ENCODE measurements at regions of chr2 and their contacts with region 1.

Region 1: DNA sequence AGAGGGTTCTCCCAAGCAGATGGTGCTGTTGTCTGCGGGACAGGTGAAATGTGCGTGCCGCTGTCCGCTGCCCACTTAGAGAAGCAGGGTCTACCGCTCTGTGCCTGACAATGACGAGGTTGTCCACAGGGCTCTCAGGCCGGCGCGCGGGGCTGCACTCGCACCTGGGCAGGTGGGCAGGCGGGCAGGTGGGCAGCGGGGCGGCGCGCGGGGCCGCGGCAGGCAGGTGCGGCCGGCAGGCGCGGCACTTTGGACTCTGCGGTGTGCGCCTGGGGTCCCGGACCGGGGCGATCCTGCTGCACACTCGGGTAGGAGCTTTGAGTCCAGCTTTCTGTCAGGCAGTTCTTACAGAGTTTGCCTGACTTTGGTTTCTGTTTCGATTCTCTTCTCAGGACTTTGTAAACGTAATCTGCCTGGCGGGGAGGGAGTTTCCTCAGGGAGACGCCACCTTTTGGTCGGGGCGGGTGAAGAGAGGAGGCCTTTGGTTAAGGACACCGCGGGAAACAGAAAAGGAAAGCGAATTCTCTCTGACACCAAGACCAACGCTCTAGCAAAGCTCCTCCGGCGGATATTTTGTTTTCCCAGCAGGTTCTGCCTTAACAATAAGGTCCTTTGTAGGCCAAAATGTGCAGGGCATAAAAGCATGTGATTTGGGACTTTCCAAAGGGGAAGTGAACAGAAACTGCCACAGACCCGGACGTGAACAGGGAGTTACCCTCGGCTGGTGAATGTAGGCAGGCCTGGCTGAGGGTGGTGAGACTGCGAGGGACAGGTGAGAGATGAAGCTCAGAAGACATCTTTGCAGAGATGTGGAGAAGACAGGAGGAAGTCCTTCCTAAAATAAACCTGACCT is at the start of gene IFIH1:
- DNase-seq: peak; percentile 40 to 91 (median 77)
- ATAC-seq: peak; percentile 72 to 90 (median 74)
- H3K4me3 ChIP-seq: peak within 1 kb of the TSS; percentile 73 to 90
- H3K4me3 Mint-ChIP-seq: peak within 1 kb of the TSS; percentile 94 to 98 (median 97)
- H3K27ac ChIP-seq: peak within 1 kb of the TSS; percentile 92
- H3K27ac Mint-ChIP-seq: peak within 1 kb of the TSS; percentile 98 to 100
- H3K4me1 ChIP-seq: peaks cover 15 to 18% of the 10 kb centered on the region in 2 experiments
- H3K4me1 Mint-ChIP-seq: peaks cover 63 to 72% (median 67%) of the 10 kb centered on the region in 3 donors
- H3K27me3 ChIP-seq: no peaks in the 10 kb centered on the region
- H3K27me3 Mint-ChIP-seq: no peaks in the 10 kb centered on the region
- total RNA-seq, gene IFIH1: 25.1 to 34.1 (median 29.2) TPM

Region 2: DNA sequence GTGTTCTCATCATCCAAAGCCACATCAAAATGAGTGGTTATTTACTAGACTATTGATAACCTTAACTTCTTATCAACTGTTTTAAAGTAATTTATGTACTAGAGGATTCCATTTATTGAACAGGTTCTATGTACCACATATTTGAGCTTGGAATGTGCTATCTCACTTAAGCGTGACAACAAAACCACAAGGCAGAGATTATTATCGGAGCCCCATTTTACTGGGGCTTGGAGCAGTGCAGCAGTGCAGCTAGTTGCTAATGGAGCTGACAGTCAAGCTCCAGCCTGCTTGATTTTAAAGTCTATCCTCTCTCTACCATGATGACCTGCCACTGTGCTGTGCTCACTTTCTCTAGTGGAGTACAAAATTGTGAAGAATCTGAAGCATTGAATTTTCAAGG is 191.1 kb before region 1 on chr2:
- CTCF ChIA-PET with region 1: no interaction called
- POLR2A ChIA-PET with region 1: no interaction called
- DNase-seq: no peak
- ATAC-seq: peak in 3 of 4 experiments; percentile 34 to 64 (median 53)
- H3K4me3 ChIP-seq: no peak overlapping the region
- H3K4me3 Mint-ChIP-seq: no peak overlapping the region
- H3K27ac ChIP-seq: no peak overlapping the region
- H3K27ac Mint-ChIP-seq: no peak overlapping the region
- H3K4me1 ChIP-seq: no peaks in the 10 kb centered on the region
- H3K4me1 Mint-ChIP-seq: peaks cover 9 to 18% (median 16%) of the 10 kb centered on the region in 3 donors
- H3K27me3 ChIP-seq: no peaks in the 10 kb centered on the region
- H3K27me3 Mint-ChIP-seq: no peaks in the 10 kb centered on the region

Region 3: DNA sequence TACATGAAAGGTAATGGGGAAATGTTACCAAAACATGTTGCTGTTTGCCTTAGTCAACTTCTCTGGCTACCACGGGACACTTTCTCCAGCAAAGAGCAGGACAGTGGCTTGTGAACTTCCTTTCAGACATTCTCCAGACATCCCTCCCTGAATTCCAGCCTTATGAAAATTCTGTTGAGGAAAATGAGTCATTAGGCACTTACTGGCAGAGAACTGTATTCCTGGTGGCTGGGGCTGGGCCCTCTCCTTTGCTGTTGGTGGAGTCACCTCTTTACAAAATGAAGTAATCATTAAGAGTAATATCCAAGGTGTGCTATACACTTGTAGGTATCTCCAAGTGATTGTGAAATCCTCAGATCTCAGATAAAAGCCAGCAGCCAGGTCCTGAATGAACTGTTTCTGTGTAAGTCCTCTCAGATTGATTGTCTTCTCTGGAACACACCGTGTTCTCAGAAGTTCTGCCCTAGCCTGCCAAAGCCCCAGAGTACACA is 74.0 kb before region 1 on chr2:
- CTCF ChIA-PET with region 1: no interaction called
- POLR2A ChIA-PET with region 1: no interaction called
- DNase-seq: no peak
- ATAC-seq: no peak
- H3K4me3 ChIP-seq: no peak overlapping the region
- H3K4me3 Mint-ChIP-seq: no peak overlapping the region
- H3K27ac ChIP-seq: no peak overlapping the region
- H3K27ac Mint-ChIP-seq: no peak overlapping the region
- H3K4me1 ChIP-seq: no peaks in the 10 kb centered on the region
- H3K4me1 Mint-ChIP-seq: no peaks in the 10 kb centered on the region
- H3K27me3 ChIP-seq: peaks cover 0 to 2% of the 10 kb centered on the region in 2 experiments
- H3K27me3 Mint-ChIP-seq: peaks cover 18 to 21% of the 10 kb centered on the region in 2 donors

Region 4: GRCh38 chr2:162282765-162283425 is 35.7 kb before region 1 on chr2:
- CTCF ChIA-PET with region 1: no interaction called
- POLR2A ChIA-PET with region 1: no interaction called
- DNase-seq: no peak
- ATAC-seq: no peak
- H3K4me3 ChIP-seq: no peak overlapping the region
- H3K4me3 Mint-ChIP-seq: no peak overlapping the region
- H3K27ac ChIP-seq: no peak overlapping the region
- H3K27ac Mint-ChIP-seq: no peak overlapping the region
- H3K4me1 ChIP-seq: no peaks in the 10 kb centered on the region
- H3K4me1 Mint-ChIP-seq: no peaks in the 10 kb centered on the region
- H3K27me3 ChIP-seq: no peaks in the 10 kb centered on the region
- H3K27me3 Mint-ChIP-seq: no peaks in the 10 kb centered on the region

Region 5: DNA sequence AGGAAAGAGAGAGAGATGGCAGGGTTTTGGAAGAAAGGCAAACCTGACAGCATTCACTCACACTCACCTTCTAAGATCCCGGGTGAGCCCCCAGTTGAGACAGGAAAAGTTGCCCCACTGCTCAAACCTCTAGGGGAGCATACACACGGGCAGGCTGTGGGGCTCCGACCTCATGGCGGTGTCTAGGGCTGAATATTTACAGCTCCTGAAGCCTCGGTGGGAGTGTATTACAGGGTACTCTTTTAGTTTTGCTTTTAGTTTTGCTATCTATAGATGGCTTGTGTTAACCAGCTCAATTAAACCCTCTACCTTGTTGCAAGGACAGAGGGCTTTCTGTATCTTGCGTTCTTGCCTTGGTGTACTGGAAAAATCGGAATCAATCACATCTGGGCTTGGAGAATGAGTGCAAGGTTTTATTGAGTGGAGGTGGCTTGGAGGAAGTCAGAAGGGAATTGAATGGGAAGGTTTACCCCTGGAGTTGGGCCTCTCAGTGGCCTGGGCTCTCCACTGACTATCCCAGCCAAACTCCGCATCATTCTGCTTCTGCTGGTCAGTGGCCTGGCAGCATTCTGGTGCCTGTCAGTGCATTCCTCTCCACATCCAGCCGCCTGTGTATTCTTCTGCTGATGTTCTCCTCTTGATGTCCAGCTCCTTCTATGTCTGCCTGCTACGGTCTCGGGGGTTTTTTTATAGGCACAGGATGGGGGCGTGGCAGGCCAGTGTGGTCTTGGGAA is 10.0 kb after region 1 on chr2:
- CTCF ChIA-PET with region 1: interaction called in 1 of 2 experiments, 13 read pairs
- POLR2A ChIA-PET with region 1: interaction called in 1 of 2 experiments, 3 read pairs
- DNase-seq: no peak
- ATAC-seq: no peak
- H3K4me3 ChIP-seq: no peak overlapping the region
- H3K4me3 Mint-ChIP-seq: no peak overlapping the region
- H3K27ac ChIP-seq: no peak overlapping the region
- H3K27ac Mint-ChIP-seq: no peak overlapping the region
- H3K4me1 ChIP-seq: no peaks in the 10 kb centered on the region
- H3K4me1 Mint-ChIP-seq: peaks cover 0 to 2% (median 0%) of the 10 kb centered on the region in 3 donors
- H3K27me3 ChIP-seq: no peaks in the 10 kb centered on the region
- H3K27me3 Mint-ChIP-seq: no peaks in the 10 kb centered on the region

Region 6: DNA sequence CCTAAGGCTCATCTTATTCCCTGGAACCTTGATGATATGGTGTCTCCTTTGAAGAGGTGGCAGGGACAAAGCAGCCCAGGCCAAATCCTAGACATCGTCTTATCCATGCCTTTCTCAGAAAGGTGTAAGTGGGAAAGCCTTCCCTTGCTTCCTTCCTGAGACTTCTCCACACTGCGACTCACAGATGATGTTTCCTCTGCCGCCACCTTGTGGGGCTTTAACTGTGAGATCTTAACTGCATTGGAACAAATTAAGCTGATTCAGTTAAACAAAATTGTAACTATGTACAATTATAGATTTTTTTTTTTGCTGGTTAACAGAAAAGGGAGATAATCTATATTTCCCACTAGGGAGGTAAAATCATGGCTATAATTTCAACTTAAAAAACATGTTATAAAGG is 15.4 kb after region 1 on chr2:
- CTCF ChIA-PET with region 1: interaction called, 5 to 13 read pairs
- POLR2A ChIA-PET with region 1: interaction called in 1 of 2 experiments, 5 read pairs
- DNase-seq: peak in 10 of 35 experiments; percentile 4 to 56 (median 13)
- ATAC-seq: peak in 2 of 4 experiments; percentile 44 to 66
- H3K4me3 ChIP-seq: no peak overlapping the region
- H3K4me3 Mint-ChIP-seq: no peak overlapping the region
- H3K27ac ChIP-seq: no peak overlapping the region
- H3K27ac Mint-ChIP-seq: no peak overlapping the region
- H3K4me1 ChIP-seq: no peaks in the 10 kb centered on the region
- H3K4me1 Mint-ChIP-seq: no peaks in the 10 kb centered on the region
- H3K27me3 ChIP-seq: no peaks in the 10 kb centered on the region
- H3K27me3 Mint-ChIP-seq: no peaks in the 10 kb centered on the region

Region 7: GRCh38 chr2:162343824-162344616 is 25.5 kb after region 1 on chr2 and contains the start of gene GCA:
- CTCF ChIA-PET with region 1: interaction called, 5 to 11 read pairs
- POLR2A ChIA-PET with region 1: interaction called, 4 to 12 read pairs
- DNase-seq: peak; percentile 95 to 100 (median 98)
- ATAC-seq: peak; percentile 96 to 99 (median 98)
- H3K4me3 ChIP-seq: peak within 1 kb of the TSS; percentile 75 to 84
- H3K4me3 Mint-ChIP-seq: peak within 1 kb of the TSS; percentile 89 to 90 (median 89)
- H3K27ac ChIP-seq: no peak within 1 kb of the TSS
- H3K27ac Mint-ChIP-seq: peak within 1 kb of the TSS; percentile 68 to 74
- H3K4me1 ChIP-seq: peaks cover 8 to 9% of the 10 kb centered on the region in 2 experiments
- H3K4me1 Mint-ChIP-seq: peaks cover 14 to 22% (median 21%) of the 10 kb centered on the region in 3 donors
- H3K27me3 ChIP-seq: no peaks in the 10 kb centered on the region
- H3K27me3 Mint-ChIP-seq: no peaks in the 10 kb centered on the region
- total RNA-seq, gene GCA: 6.5 to 12.8 (median 10.0) TPM